ENCODE measurements at regions of chr2 and their contacts with region 1.

Region 1: GRCh38 chr2:176582990-176583481 is 313.8 kb downstream of the MTX2 start:
- DNase-seq: peak; percentile 92
- H3K4me3 ChIP-seq: peak overlapping the region in 2 of 3 experiments; percentile 13 to 35
- H3K27ac ChIP-seq: peak overlapping the region; percentile 91
- H3K4me1 ChIP-seq: peaks cover 30% of the 10 kb centered on the region
- H3K27me3 ChIP-seq: no peaks in the 10 kb centered on the region
- CTCF ChIP-seq: no peak
- POLR2A ChIP-seq: no peak

Region 2: GRCh38 chr2:176565641-176566323 is 17.3 kb before region 1 on chr2:
- CTCF ChIA-PET with region 1: interaction called, 7 read pairs
- POLR2A ChIA-PET with region 1: interaction called, 4 read pairs
- dilution Hi-C with region 1: no loop called
- intact Hi-C with region 1: loop called (anchors 1 kb)
- DNase-seq: peak; percentile 98
- H3K4me3 ChIP-seq: peak overlapping the region in 1 of 3 experiments; percentile 2
- H3K27ac ChIP-seq: peak overlapping the region; percentile 67
- H3K4me1 ChIP-seq: peaks cover 15% of the 10 kb centered on the region
- H3K27me3 ChIP-seq: no peaks in the 10 kb centered on the region
- CTCF ChIP-seq: no peak
- POLR2A ChIP-seq: no peak

Region 3: GRCh38 chr2:176613323-176613987 is 30.4 kb after region 1 on chr2:
- CTCF ChIA-PET with region 1: interaction called, 12 read pairs
- POLR2A ChIA-PET with region 1: no interaction called
- dilution Hi-C with region 1: no loop called
- intact Hi-C with region 1: loop called (anchors 2 kb)
- DNase-seq: peak; percentile 80
- H3K4me3 ChIP-seq: peak overlapping the region in 1 of 3 experiments; percentile 41
- H3K27ac ChIP-seq: peak overlapping the region; percentile 32
- H3K4me1 ChIP-seq: peaks cover 34% of the 10 kb centered on the region
- H3K27me3 ChIP-seq: no peaks in the 10 kb centered on the region
- CTCF ChIP-seq: no peak
- POLR2A ChIP-seq: no peak

Region 4: GRCh38 chr2:176638167-176639015 is 55.4 kb after region 1 on chr2:
- CTCF ChIA-PET with region 1: interaction called, 8 read pairs
- POLR2A ChIA-PET with region 1: interaction called, 5 read pairs
- dilution Hi-C with region 1: no loop called
- intact Hi-C with region 1: loop called (anchors 1 kb)
- DNase-seq: peak; percentile 74
- H3K4me3 ChIP-seq: peak overlapping the region; percentile 9 to 59 (median 55)
- H3K27ac ChIP-seq: peak overlapping the region; percentile 79
- H3K4me1 ChIP-seq: peaks cover 25% of the 10 kb centered on the region
- H3K27me3 ChIP-seq: no peaks in the 10 kb centered on the region
- CTCF ChIP-seq: peak; percentile 63 to 83
- POLR2A ChIP-seq: no peak